SK-N-SH (cell line): ENCODE measurements at regions of chr9 and their contacts with region 1.

Region 1: GRCh38 chr9:137286975-137287383 is 9.5 kb downstream of the TOR4A start:
- DNase-seq: peak; percentile 86
- H3K4me3 ChIP-seq: no peak overlapping the region
- H3K27ac ChIP-seq: no peak overlapping the region
- H3K4me1 ChIP-seq: no peaks in the 10 kb centered on the region
- H3K27me3 ChIP-seq: no peaks in the 10 kb centered on the region
- CTCF ChIP-seq: peak; percentile 59
- EP300 ChIP-seq: no peak
- RAD21 ChIP-seq: peak; percentile 79

Region 2: DNA sequence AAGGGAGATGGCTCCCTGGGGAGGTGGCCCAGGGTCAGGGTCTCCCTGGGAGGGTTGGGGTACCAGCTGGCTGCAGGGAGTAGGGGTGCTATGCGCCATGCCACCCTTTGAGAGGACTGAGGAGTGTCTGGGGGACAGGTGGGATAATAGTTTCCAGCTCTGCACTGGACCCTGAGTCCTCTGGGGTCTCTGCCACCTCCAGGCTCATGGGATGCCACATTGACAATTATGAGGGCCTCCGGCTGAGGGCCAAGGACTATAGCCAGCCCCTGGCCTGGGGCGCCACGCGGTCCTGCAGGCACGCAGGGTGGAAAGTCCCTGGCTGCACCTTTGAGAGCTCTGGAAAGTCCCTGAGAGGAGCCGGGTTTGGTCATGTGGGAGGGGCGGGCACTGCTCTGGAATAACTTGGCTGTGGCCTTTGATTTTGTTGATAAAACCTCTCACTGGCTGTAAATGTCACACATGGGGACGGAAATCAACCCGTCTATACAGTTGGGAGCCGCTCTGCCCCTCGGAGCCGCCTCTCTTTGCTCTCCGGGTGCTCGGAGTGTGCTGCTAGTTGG is 384.6 kb before region 1 on chr9:
- CTCF ChIA-PET with region 1: no interaction called
- POLR2A ChIA-PET with region 1: no interaction called
- DNase-seq: no peak
- H3K4me3 ChIP-seq: no peak overlapping the region
- H3K27ac ChIP-seq: peak overlapping the region; percentile 41 to 75
- H3K4me1 ChIP-seq: peaks cover 6 to 19% of the 10 kb centered on the region in 2 experiments; a peak in 3 of 4 replicates
- H3K27me3 ChIP-seq: no peaks in the 10 kb centered on the region
- CTCF ChIP-seq: no peak
- EP300 ChIP-seq: peak in 1 of 2 experiments; percentile 31; a peak in 1 of 4 replicates
- RAD21 ChIP-seq: no peak

Region 3: GRCh38 chr9:137273611-137274320 is 13.2 kb before region 1 on chr9:
- CTCF ChIA-PET with region 1: interaction called, 16 read pairs
- POLR2A ChIA-PET with region 1: interaction called, 4 read pairs
- DNase-seq: no peak
- H3K4me3 ChIP-seq: no peak overlapping the region
- H3K27ac ChIP-seq: no peak overlapping the region
- H3K4me1 ChIP-seq: no peaks in the 10 kb centered on the region; a peak in 2 of 4 replicates
- H3K27me3 ChIP-seq: no peaks in the 10 kb centered on the region
- CTCF ChIP-seq: no peak
- EP300 ChIP-seq: no peak
- RAD21 ChIP-seq: no peak

Region 4: GRCh38 chr9:137302176-137302994 is 15.4 kb after region 1 on chr9 and contains the start of gene NRARP:
- CTCF ChIA-PET with region 1: interaction called, 14 read pairs
- POLR2A ChIA-PET with region 1: interaction called, 3 read pairs
- DNase-seq: peak; percentile 98
- H3K4me3 ChIP-seq: peak within 1 kb of the TSS; percentile 51 to 65
- H3K27ac ChIP-seq: peak within 1 kb of the TSS in 1 of 2 experiments; percentile 71; a peak in 2 of 4 replicates
- H3K4me1 ChIP-seq: peaks cover 0 to 21% of the 10 kb centered on the region in 2 experiments; a peak in 2 of 4 replicates
- H3K27me3 ChIP-seq: no peaks in the 10 kb centered on the region
- CTCF ChIP-seq: peak; percentile 58
- EP300 ChIP-seq: no peak
- RAD21 ChIP-seq: 0 out of 2 replicates have a peak, but pooled peaks have one; percentile 22
- polyA plus RNA-seq, gene NRARP: 3.9 and 4.2 TPM in 2 replicates

Region 5: GRCh38 chr9:137445275-137445807 is 158.4 kb after region 1 on chr9:
- CTCF ChIA-PET with region 1: interaction called, 35 read pairs
- POLR2A ChIA-PET with region 1: no interaction called
- DNase-seq: peak; percentile 83
- H3K4me3 ChIP-seq: peak overlapping the region in 1 of 2 experiments; percentile 35; a peak in 1 of 4 replicates
- H3K27ac ChIP-seq: no peak overlapping the region
- H3K4me1 ChIP-seq: peaks cover 0 to 10% of the 10 kb centered on the region in 2 experiments; a peak in 2 of 4 replicates
- H3K27me3 ChIP-seq: peaks cover 4% of the 10 kb centered on the region; the same call in 1 of the 2 replicates
- CTCF ChIP-seq: peak; percentile 89
- EP300 ChIP-seq: no peak
- RAD21 ChIP-seq: peak; percentile 72